GM10248 (cell line): ENCODE measurements at regions of chr17 and their contacts with region 1.

Region 1: GRCh38 chr17:28252436-28252835 is 66.6 kb upstream of the TMEM97 start:
- DNase-seq: no peak
- CTCF ChIP-seq: no peak

Region 2: GRCh38 chr17:27892866-27893769 is 359.3 kb before region 1 on chr17 and contains the start of gene LYRM9:
- CTCF ChIA-PET with region 1: interaction called, 13 read pairs
- POLR2A ChIA-PET with region 1: no interaction called
- DNase-seq: peak; percentile 96
- CTCF ChIP-seq: peak; percentile 95

Region 3: DNA sequence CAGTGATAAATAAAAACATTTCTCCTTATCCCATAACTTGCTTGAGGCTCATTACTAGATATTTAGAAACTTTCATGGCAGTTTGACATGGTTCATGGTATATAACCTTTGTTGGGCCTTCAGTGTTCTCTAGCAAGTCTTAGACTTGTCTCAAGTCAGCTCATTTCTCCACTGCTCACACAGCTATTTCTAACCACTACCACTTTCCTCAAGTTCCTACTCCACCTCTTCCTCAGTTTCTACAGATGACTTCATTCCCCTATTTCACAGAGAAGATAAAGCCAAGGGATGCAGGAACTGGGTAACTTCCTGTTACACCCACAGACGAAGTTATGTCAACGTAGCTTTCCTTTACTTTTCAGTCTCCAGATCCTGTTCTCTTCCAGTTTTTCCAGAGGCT is 186.7 kb before region 1 on chr17:
- CTCF ChIA-PET with region 1: no interaction called
- POLR2A ChIA-PET with region 1: no interaction called
- DNase-seq: no peak
- CTCF ChIP-seq: no peak

Region 4: DNA sequence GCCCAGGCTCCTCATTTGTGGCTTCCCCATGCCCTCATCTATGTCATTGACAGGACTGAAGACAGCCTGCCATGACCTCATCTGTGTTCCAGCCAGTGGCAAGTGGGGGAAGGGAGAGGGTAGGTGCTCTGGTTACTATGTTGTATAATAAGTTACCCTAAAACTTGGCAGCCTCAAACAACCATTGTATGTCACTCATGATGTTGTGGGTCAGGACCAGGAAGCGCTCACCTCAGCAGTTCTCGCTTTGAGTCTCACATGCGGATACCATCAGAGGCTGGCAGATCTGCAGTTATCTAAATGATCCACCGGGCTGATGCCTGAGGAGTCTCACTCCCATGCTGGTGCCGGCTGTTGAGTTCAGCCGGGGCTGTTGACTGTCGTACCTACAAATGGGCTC is 22.4 kb before region 1 on chr17:
- CTCF ChIA-PET with region 1: interaction called, 66 read pairs
- POLR2A ChIA-PET with region 1: no interaction called
- DNase-seq: no peak
- CTCF ChIP-seq: no peak

Region 5: GRCh38 chr17:28240991-28241340 is 11.5 kb before region 1 on chr17:
- CTCF ChIA-PET with region 1: interaction called, 66 read pairs
- POLR2A ChIA-PET with region 1: no interaction called
- DNase-seq: no peak
- CTCF ChIP-seq: no peak

Region 6: GRCh38 chr17:28272166-28272565 is 19.7 kb after region 1 on chr17:
- CTCF ChIA-PET with region 1: interaction called, 35 read pairs
- POLR2A ChIA-PET with region 1: no interaction called
- DNase-seq: no peak
- CTCF ChIP-seq: no peak

Region 7: DNA sequence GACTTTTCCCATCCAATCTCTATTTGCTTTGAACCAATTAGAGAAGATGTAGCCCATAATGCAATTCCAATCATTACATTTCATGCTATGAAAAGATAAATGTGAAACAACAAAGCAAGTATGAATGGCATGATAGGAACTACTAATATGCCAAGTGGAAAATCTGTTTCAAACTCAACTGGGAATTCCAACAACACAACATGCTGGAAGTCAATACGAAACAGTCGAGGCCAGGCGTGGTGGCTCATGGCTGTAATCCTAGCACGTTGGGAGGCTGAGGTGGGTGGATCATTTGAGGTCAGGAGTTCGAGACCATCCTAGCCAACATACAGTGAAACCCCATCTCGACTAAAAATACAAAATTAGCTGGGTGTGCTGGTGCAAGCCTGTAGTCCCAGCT is 27.0 kb after region 1 on chr17:
- CTCF ChIA-PET with region 1: interaction called, 35 read pairs
- POLR2A ChIA-PET with region 1: no interaction called
- DNase-seq: no peak
- CTCF ChIP-seq: no peak

Region 8: DNA sequence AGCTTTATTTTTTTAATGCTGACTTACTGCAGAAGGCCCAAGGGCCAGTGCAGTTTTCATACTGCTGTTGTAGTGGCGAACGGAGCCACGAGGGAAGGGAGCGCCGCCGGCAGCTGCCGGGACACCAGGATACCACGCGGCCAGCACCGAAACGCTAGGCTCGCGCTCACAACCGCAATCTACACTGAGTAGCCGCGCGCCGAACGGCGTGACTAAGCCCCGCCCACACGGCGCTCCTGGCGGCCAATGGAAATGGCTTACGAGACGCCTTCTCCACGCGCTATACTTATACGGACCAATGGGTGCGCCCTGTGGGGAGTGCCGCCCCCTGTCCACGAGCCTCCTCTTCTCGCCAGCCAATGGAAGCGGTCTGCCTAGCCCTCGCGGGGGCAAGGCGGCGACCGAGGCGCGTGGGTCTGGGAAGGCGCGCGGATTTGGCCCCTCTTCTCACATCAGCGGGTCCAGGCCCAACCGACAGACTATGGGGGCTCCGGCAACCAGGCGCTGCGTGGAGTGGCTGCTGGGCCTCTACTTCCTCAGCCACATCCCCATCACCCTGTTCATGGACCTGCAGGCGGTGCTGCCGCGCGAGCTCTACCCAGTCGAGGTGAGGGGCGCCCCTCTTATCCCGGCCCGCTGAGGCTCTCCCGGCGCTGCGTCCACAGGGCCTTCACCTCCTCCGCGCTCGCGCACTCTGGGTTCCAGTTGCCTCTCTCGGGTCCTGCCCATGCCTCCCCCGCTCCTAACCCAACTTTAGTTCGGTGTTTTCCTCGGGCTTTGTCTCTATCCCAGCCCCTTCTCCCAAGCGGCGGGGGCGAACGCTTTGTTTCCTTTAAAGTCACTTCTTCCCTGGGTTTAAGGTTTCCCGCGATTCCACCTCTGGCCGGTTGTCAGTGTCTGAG is 66.6 kb after region 1 on chr17 and contains the start of gene TMEM97:
- CTCF ChIA-PET with region 1: interaction called, 16 read pairs
- POLR2A ChIA-PET with region 1: no interaction called
- DNase-seq: peak; percentile 98
- CTCF ChIP-seq: no peak

Region 9: DNA sequence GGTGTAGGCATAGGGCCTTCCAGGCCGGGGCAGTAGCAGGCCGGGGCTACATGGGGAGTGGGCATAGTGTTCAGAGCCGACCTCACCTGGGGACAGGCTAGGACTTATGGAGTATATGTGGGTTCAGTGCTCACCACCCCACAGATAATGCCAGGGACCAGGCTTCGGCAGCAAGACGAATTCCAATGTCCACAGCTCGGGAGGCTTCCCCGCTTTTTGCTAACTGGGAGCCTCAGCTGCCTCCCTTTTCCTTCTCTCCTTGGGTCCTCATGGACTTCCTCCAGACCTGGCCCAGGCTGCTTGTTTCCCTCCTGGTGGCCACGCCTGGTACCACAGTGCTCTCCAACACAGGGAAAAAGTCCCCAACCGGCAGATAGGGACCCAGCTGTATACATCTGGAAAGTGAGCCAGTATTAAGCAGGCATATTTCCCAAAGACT is 173.7 kb after region 1 on chr17:
- CTCF ChIA-PET with region 1: no interaction called
- POLR2A ChIA-PET with region 1: no interaction called
- DNase-seq: no peak
- CTCF ChIP-seq: no peak